ENCODE measurements at regions of chr6 and their contacts with region 1.

Region 1: GRCh38 chr6:50868466-50868865 is 49.8 kb downstream of the TFAP2B start:
- DNase-seq: no peak
- H3K4me3 ChIP-seq: no peak overlapping the region
- H3K27ac ChIP-seq: no peak overlapping the region
- H3K4me1 ChIP-seq: no peaks in the 10 kb centered on the region
- CTCF ChIP-seq: no peak

Region 2: GRCh38 chr6:50637267-50637666 is 231.2 kb before region 1 on chr6:
- CTCF ChIA-PET with region 1: no interaction called
- POLR2A ChIA-PET with region 1: interaction called, 11 read pairs
- intact Hi-C with region 1: no loop called
- DNase-seq: no peak
- H3K4me3 ChIP-seq: no peak overlapping the region
- H3K27ac ChIP-seq: no peak overlapping the region
- H3K4me1 ChIP-seq: no peaks in the 10 kb centered on the region
- CTCF ChIP-seq: no peak

Measured in OCI-LY7 (cell line).